Activated CD4-positive, alpha-beta memory T cell treated with anti-CD3 and anti-CD28 coated beads for 36 hours (primary cell): ENCODE measurements at regions of chr12 and their contacts with region 1.

Region 1: GRCh38 chr12:69359531-69360347 is at the start of gene YEATS4:
- DNase-seq: peak; percentile 95
- H3K4me3 Mint-ChIP-seq: peak within 1 kb of the TSS; percentile 76
- H3K27ac Mint-ChIP-seq: peak within 1 kb of the TSS; percentile 94
- H3K4me1 Mint-ChIP-seq: peaks cover 32% of the 10 kb centered on the region
- H3K27me3 Mint-ChIP-seq: no peaks in the 10 kb centered on the region
- total RNA-seq, gene YEATS4: 50.4 to 50.6 TPM

Region 2: DNA sequence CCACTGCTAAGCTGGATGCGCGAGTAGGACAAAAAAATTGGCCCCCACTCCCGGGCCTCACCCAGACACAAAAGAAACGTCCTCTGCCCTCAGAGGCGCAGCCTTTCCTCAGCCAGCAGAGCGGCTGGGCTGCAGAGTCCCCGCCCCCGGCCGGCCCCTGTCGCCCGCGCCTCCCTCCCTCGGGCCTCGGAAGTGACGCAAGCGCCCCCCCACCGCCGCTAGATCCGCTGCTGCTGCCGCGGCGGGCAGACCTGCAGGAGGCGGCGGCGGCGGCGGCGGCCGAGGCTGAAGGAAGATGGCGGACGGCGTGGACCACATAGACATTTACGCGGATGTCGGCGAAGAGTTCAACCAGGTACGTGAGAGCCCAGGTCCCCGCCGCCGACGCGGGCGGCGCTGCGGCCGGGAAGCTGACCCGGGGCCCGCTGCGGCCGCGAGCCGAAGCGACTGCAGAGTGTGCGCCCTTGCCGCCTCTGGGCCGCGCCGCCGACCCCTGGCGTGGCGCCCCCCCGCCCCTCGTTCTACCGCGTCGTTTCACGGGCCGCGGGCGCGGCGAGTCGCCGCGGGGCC is 120.3 kb before region 1 on chr12 and contains the start of gene CPSF6:
- CTCF ChIA-PET with region 1: no interaction called
- POLR2A ChIA-PET with region 1: no interaction called
- intact Hi-C with region 1: loop called (anchors 1 kb)
- DNase-seq: peak; percentile 98
- H3K4me3 Mint-ChIP-seq: peak within 1 kb of the TSS; percentile 96
- H3K27ac Mint-ChIP-seq: peak within 1 kb of the TSS; percentile 99
- H3K4me1 Mint-ChIP-seq: peaks cover 46% of the 10 kb centered on the region
- H3K27me3 Mint-ChIP-seq: no peaks in the 10 kb centered on the region
- total RNA-seq, gene CPSF6: 86.6 to 90.0 TPM

Region 3: DNA sequence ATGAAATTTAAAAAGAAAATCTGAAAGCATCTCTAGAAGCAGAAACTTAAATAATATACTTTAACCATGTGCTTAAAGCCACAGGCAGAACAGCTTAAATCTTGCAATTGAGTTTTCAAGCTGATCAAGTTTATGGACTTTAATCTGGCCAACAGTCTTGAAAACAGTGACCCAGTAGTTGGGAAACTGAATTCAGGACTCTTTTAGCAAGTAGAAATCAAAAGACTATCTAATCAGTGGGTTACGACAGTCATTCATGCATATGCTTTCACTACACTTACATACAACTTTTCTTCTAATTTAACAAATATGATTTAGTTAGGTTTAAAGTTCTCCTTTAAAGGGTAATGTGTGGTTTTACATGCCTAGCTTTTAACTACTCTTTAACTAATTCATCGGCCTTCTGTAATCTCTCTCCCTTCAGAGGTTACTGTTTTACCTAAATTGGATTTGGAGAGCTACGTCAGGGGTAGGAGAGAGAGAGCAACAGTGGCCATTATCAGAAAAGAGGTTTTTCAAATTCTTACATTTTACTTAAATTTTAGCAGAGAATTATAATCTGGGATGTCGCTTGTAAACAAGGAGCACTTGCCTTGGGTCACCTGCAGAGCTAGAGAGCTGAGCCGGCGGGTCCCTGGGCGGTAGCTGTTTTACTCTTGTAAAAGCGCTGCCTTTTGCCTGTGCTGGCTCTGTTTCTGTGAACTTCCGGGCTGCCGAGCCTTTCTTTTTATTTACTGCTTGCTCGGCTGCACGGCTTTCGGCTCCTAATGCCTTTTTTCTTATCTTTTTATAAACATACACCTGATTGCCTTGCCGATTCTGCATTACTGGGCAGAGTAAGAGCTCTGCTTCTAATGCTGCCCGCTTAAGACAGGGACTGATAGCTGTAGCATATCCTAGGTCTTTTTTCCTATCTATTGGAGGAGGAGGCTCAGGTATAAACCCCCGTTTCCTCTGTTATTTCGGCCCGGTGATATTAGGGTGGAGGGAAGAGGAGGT is 29.0 kb before region 1 on chr12:
- CTCF ChIA-PET with region 1: interaction called, 14 read pairs
- POLR2A ChIA-PET with region 1: interaction called, 11 read pairs
- intact Hi-C with region 1: loop called (anchors 1 kb)
- DNase-seq: peak; percentile 71
- H3K4me3 Mint-ChIP-seq: peak overlapping the region; percentile 73
- H3K27ac Mint-ChIP-seq: peak overlapping the region; percentile 88
- H3K4me1 Mint-ChIP-seq: peaks cover 53% of the 10 kb centered on the region
- H3K27me3 Mint-ChIP-seq: no peaks in the 10 kb centered on the region

Region 4: DNA sequence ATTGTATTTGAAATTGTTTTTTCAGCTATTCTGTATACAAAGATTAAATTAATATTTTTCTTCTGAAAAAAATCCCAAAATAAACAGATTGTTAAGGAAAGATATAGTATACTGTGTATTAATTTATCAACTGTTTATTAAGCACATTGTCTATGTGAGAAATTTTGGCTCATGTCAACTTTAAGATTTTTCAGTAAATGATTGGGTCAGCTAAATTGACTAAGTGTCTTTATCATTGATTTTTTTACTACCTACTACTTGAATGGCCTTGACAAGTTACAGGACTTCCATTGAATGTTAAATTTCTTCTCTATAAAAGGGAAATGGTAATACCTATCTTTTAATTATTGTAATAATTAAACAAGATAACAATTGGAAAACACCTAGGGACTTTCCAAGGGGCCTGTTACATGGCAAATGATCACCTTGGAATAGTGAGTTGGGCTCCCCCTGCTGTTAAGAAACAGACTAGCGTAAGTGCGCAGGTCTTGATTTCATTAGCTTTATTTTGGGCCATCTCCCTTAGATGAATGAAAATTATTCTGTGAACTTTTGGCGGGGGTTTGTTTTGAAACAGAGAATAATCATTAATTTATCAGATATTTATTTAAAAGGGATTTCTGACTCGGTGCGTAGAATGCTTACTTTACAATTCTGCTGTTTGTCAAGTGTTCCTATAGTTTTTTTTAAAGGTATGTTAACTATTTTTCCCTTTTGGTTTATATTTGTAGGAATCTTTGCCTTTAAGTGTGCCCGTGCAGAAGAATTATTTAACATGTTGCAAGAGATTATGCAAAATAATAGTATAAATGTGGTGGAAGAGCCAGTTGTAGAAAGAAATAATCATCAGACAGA is 211.0 kb after region 1 on chr12:
- CTCF ChIA-PET with region 1: interaction called, 76 read pairs
- POLR2A ChIA-PET with region 1: interaction called, 4 read pairs
- intact Hi-C with region 1: loop called (anchors 1 kb)
- DNase-seq: peak; percentile 54
- H3K4me3 Mint-ChIP-seq: no peak overlapping the region
- H3K27ac Mint-ChIP-seq: no peak overlapping the region
- H3K4me1 Mint-ChIP-seq: peaks cover 9% of the 10 kb centered on the region
- H3K27me3 Mint-ChIP-seq: no peaks in the 10 kb centered on the region

Region 5: DNA sequence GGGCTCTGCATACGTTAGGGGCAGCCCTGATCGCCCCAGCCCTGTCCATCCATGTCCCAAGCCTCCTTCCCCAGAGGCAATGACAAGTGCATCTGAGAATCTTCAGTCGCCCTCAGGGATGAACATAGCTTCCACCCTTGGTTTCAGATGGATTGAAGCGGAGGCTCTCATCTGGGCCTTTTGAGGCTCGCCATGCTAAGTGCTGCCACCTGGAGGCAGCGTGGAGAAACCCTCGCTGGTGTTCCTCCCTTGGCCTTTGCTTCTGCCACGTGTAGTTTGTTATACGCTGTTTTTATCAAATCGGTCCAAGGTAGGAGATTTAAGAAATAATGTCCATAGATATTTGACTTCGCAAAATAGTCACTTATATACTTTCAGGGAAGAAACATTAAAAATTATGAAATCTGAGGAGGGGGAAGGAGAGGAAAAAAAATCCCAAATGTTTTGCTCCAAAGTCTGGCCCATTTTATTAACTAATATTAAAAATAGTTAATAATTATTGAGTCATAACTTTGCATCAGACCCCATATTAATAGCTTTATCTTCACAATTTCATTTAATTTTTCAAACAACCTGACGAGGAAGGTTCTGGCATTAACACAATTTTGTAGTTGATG is 279.8 kb after region 1 on chr12:
- CTCF ChIA-PET with region 1: interaction called, 48 read pairs
- POLR2A ChIA-PET with region 1: no interaction called
- intact Hi-C with region 1: loop called (anchors 1 kb)
- DNase-seq: peak; percentile 73
- H3K4me3 Mint-ChIP-seq: no peak overlapping the region
- H3K27ac Mint-ChIP-seq: no peak overlapping the region
- H3K4me1 Mint-ChIP-seq: no peaks in the 10 kb centered on the region
- H3K27me3 Mint-ChIP-seq: no peaks in the 10 kb centered on the region

Region 6: GRCh38 chr12:70242695-70243509 is 883.2 kb after region 1 on chr12 and contains the start of gene CNOT2:
- CTCF ChIA-PET with region 1: no interaction called
- POLR2A ChIA-PET with region 1: no interaction called
- intact Hi-C with region 1: loop called (anchors 2 kb)
- DNase-seq: peak; percentile 94
- H3K4me3 Mint-ChIP-seq: peak within 1 kb of the TSS; percentile 99
- H3K27ac Mint-ChIP-seq: peak within 1 kb of the TSS; percentile 100
- H3K4me1 Mint-ChIP-seq: peaks cover 55% of the 10 kb centered on the region
- H3K27me3 Mint-ChIP-seq: no peaks in the 10 kb centered on the region
- total RNA-seq, gene CNOT2: 58.4 to 58.5 TPM